HepG2 (cell line): ENCODE measurements at regions of chr2 and their contacts with region 1.

Region 1: DNA sequence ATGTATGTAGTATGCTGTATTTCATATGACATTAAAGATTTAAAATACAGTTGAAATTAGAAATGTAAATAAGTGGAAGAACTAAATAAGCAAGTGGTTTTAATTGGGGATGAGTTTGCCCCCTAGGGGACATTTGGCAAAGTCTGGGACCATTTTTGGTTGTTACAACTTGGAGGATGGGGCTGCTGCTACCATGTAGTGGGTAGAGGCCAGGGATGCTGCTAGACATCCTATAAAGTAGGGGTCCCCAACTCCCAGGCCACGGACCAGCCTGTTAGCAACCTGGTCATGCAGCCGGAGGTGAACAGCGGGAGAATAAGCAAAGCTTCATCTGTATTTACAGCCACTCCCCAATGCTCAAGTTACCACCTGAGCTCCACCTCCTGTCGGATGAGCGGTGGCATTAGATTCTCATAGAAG is 27.9 kb upstream of the ASNSD1 start:
- DNase-seq: no peak
- ATAC-seq: peak; percentile 78
- H3K4me3 ChIP-seq: no peak overlapping the region
- H3K27ac ChIP-seq: no peak overlapping the region
- H3K4me1 ChIP-seq: no peaks in the 10 kb centered on the region
- H3K27me3 ChIP-seq: no peaks in the 10 kb centered on the region
- CTCF ChIP-seq: peak; percentile 53
- EP300 ChIP-seq: no peak
- POLR2A ChIP-seq: no peak
- RAD21 ChIP-seq: peak; percentile 37; the same call in 1 of the 2 replicates

Region 2: DNA sequence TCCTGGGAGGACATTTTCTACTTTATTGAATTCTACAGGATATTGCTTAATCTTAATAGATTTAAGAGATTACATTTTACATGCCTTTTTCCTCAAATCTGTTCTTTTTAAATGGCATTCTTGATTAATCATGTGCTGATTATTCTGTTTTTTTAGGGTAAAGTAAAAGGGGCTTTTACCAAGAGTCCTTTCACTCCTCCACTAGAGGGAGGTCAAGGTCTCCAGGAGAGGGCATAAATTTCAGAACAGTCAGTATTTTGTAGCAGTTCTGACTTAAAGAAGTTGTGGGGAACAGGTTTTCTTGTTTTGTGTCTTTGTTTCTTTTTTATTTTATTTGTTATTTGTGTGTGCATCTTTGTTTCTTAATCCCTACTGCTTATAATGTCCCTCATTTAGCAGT is 166.7 kb before region 1 on chr2:
- CTCF ChIA-PET with region 1: interaction called, 19 read pairs
- POLR2A ChIA-PET with region 1: no interaction called
- in situ Hi-C with region 1: no loop called
- intact Hi-C with region 1: loop called (anchors 1 kb)
- DNase-seq: peak; percentile 55
- ATAC-seq: peak; percentile 78
- H3K4me3 ChIP-seq: no peak overlapping the region
- H3K27ac ChIP-seq: no peak overlapping the region
- H3K4me1 ChIP-seq: 0 out of 2 replicates have a peak, but pooled peaks cover 10% of the 10 kb centered on the region
- H3K27me3 ChIP-seq: no peaks in the 10 kb centered on the region
- CTCF ChIP-seq: peak; percentile 61
- EP300 ChIP-seq: no peak
- POLR2A ChIP-seq: no peak
- RAD21 ChIP-seq: peak; percentile 74